AG04450 (cell line): ENCODE measurements at regions of chr17 and their contacts with region 1.

Region 1: GRCh38 chr17:73192894-73193701 is at the start of gene COG1:
- DNase-seq: peak; percentile 59
- H3K4me3 ChIP-seq: peak within 1 kb of the TSS; percentile 93
- H3K27ac ChIP-seq: peak within 1 kb of the TSS; percentile 84
- H3K27me3 ChIP-seq: no peaks in the 10 kb centered on the region
- CTCF ChIP-seq: no peak
- polyA plus RNA-seq, gene COG1: 30.2 and 36.9 TPM in 2 replicates

Region 2: GRCh38 chr17:72931163-72931562 is 261.9 kb before region 1 on chr17:
- CTCF ChIA-PET with region 1: interaction called, 11 read pairs
- POLR2A ChIA-PET with region 1: no interaction called
- DNase-seq: no peak
- H3K4me3 ChIP-seq: no peak overlapping the region
- H3K27ac ChIP-seq: no peak overlapping the region
- H3K27me3 ChIP-seq: no peaks in the 10 kb centered on the region
- CTCF ChIP-seq: no peak

Region 3: DNA sequence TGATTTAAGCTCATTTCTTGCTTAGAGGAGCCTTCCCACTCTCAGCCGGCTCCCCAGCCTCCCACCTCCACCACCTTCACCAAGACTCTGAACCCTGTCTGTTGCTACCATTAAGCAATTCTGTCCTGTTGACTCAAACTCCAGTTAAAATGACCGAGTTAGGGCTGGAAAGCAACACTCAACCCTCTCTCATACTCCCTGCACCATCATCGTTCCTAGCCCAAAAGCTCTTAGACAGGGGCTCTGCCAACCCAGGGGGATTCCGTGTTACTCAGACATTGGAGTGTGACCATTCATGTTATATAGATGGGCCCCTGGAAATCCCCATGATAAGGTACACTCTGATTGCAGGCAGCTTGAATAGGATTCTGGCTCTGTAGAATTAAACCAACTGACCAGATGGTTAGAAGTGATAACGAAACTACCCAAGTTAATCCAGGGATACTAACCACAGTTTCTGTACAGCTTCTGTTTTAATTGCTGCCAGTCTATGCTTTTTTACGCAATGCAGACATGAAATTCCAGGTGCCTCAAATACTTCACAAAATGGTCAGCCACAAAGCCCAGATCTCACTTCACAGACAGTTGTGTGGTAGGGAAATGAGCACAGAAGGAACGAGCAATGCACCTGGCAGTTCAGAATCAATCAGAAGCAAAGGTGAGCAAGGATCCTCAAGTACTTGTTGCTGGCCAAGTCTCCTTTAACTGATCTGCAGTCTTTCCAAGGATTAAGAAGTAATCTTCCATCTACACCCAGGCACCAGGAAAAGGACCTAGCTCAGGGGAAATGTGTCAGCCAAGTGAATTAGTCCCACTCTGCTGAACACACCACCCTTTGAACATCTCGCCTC is 26.1 kb before region 1 on chr17:
- CTCF ChIA-PET with region 1: interaction called, 10 read pairs
- POLR2A ChIA-PET with region 1: no interaction called
- DNase-seq: no peak
- H3K4me3 ChIP-seq: peak overlapping the region; percentile 57
- H3K27ac ChIP-seq: no peak overlapping the region
- H3K27me3 ChIP-seq: peaks cover 60% of the 10 kb centered on the region
- CTCF ChIP-seq: no peak

Region 4: GRCh38 chr17:73182616-73183310 is 10.3 kb before region 1 on chr17:
- CTCF ChIA-PET with region 1: interaction called, 17 read pairs
- POLR2A ChIA-PET with region 1: no interaction called
- DNase-seq: peak; percentile 6
- H3K4me3 ChIP-seq: no peak overlapping the region
- H3K27ac ChIP-seq: no peak overlapping the region
- H3K27me3 ChIP-seq: peaks cover 2% of the 10 kb centered on the region
- CTCF ChIP-seq: no peak

Region 5: DNA sequence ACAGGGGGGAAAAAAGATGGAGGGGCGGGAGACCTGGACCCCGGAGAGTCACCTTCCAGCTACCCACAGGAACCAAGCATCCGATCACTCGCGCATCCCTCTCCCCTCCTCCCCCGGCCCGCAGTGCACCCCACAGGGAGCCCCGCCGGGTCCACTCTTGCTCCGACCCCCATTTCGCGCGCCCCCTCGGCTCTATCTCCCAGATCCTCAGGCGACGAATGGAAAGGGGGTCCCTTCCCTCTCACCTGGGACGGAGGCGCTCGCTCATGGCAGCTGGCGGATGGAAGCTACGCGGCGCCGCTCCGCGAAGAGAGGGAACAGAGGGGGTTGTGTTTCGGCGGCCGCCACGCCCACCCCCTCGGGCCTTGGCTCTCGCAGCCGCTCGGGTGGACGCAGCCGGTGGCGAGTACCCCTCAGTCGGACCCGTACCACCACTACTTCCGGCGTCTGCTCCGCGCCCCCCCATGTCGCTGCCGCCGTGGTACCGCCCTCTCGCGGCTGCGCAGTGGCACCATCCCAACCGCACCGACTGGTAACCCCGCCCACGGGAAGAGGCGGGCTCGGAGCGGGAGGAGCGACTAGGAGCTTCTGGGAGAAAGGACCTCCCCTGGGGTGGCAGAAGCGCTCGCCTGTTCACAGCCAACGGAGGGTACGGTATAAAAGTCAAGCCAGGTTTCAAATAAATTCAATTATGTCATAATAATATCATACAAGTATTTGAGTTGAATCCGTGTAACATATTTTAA is 38.9 kb after region 1 on chr17:
- CTCF ChIA-PET with region 1: interaction called, 20 read pairs
- POLR2A ChIA-PET with region 1: interaction called, 9 read pairs
- DNase-seq: peak; percentile 88
- H3K4me3 ChIP-seq: peak overlapping the region; percentile 90
- H3K27ac ChIP-seq: peak overlapping the region; percentile 39
- H3K27me3 ChIP-seq: no peaks in the 10 kb centered on the region
- CTCF ChIP-seq: peak; percentile 28; the same call in 1 of the 2 replicates

Region 6: GRCh38 chr17:73278465-73279453 is 85.7 kb after region 1 on chr17:
- CTCF ChIA-PET with region 1: no interaction called
- POLR2A ChIA-PET with region 1: no interaction called
- DNase-seq: no peak
- H3K4me3 ChIP-seq: no peak overlapping the region
- H3K27ac ChIP-seq: no peak overlapping the region
- H3K27me3 ChIP-seq: no peaks in the 10 kb centered on the region
- CTCF ChIP-seq: no peak

Region 7: DNA sequence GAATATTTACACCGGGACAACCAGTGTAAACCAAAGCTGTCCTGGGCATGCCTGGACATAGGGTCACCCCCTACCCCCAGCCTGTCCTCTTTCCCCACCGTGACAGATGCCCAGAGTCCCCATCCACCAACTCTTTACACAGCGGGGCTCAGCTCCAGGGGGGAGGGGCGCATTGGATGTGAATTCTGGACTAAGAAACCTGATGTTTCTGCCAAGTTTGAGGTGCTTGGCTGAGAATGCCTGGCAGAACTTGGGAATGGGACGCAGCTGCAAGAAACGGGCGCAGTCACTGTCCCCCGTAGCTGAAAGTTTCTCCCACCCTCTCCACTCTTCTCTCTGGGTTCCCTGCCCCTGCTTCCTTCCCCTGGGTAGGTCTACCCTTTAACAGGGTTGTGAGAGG is 186.7 kb after region 1 on chr17:
- CTCF ChIA-PET with region 1: no interaction called
- POLR2A ChIA-PET with region 1: no interaction called
- DNase-seq: no peak
- H3K4me3 ChIP-seq: no peak overlapping the region
- H3K27ac ChIP-seq: no peak overlapping the region
- H3K27me3 ChIP-seq: peaks cover 26% of the 10 kb centered on the region
- CTCF ChIP-seq: no peak